ENCODE measurements at regions of chr11 and their contacts with region 1.

Region 1: GRCh38 chr11:47152953-47153950 is 23.4 kb downstream of the ARFGAP2 start:
- DNase-seq: peak; percentile 85
- ATAC-seq: peak; percentile 78

Region 2: GRCh38 chr11:46889689-46890475 is 263.4 kb before region 1 on chr11:
- intact Hi-C with region 1: loop called (anchors 2 kb)
- DNase-seq: peak; percentile 32
- ATAC-seq: peak; percentile 83